Common myeloid progenitor, CD34-positive (primary cell): ENCODE measurements at regions of chr12 and their contacts with region 1.

Region 1: DNA sequence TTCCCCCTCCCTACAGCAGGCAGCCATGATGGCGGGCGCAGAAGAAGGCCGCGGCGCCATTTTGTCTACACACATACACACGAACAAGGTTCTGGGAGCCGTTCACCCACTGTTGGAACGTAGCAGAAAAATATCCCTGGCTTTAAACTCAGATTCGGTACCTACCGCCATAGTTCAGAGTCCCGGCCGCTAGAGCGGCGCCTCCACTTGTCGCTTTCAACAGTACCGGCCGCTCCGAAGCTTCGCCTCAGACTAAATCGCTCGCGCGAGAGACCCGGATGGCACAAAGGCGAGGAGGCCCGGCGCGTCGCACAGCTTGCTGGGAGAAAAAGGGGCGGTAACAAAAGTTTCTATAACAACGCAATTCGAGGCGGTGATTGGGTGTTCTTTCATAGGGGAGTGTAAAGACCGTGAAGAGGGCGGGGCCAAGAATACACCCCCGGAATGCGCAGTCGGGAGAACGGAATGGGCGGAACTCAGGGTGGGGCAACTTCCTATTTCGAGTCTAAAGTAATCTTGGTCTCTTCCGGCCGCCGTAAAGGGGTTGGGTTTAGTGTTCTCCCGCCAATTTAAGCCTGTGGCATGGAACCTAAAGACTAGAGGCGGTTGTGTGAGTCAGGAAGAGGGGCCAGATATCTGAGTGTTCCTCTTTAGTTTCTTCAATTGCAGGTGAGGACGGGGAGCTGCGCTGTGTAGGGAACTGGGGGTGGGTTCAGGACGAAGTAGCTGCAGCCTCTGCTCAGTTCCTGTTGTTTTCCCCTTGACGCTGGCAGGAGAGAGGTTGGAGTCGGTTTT is at the starts of genes KNTC1 and RSRC2:
- DNase-seq: peak; percentile 99 to 100 (median 100)
- H3K4me3 ChIP-seq: peak within 1 kb of the TSS; percentile 79 to 100 (median 99)
- H3K27ac ChIP-seq: peak within 1 kb of the TSS; percentile 100
- H3K4me1 ChIP-seq: peaks cover 14 to 41% (median 27%) of the 10 kb centered on the region in 4 experiments
- H3K27me3 ChIP-seq: no peaks in the 10 kb centered on the region

Region 2: GRCh38 chr12:122500685-122501488 is 26.0 kb before region 1 on chr12 and contains the start of gene ZCCHC8:
- CTCF ChIA-PET with region 1: interaction called, 3 read pairs
- POLR2A ChIA-PET with region 1: interaction called, 16 read pairs
- DNase-seq: peak; percentile 97 to 99 (median 99)
- H3K4me3 ChIP-seq: peak within 1 kb of the TSS; percentile 61 to 100 (median 97)
- H3K27ac ChIP-seq: peak within 1 kb of the TSS; percentile 90 to 96
- H3K4me1 ChIP-seq: peaks cover 4 to 31% (median 16%) of the 10 kb centered on the region in 4 experiments
- H3K27me3 ChIP-seq: no peaks in the 10 kb centered on the region